Activated CD8-positive, alpha-beta T cell treated with anti-CD3 and anti-CD28 coated beads, Interleukin-2, amount 10 ng/mL, durations not matched to agents 7 days and 5 days (primary cell): ENCODE measurements at regions of chr3 and their contacts with region 1.

Region 1: DNA sequence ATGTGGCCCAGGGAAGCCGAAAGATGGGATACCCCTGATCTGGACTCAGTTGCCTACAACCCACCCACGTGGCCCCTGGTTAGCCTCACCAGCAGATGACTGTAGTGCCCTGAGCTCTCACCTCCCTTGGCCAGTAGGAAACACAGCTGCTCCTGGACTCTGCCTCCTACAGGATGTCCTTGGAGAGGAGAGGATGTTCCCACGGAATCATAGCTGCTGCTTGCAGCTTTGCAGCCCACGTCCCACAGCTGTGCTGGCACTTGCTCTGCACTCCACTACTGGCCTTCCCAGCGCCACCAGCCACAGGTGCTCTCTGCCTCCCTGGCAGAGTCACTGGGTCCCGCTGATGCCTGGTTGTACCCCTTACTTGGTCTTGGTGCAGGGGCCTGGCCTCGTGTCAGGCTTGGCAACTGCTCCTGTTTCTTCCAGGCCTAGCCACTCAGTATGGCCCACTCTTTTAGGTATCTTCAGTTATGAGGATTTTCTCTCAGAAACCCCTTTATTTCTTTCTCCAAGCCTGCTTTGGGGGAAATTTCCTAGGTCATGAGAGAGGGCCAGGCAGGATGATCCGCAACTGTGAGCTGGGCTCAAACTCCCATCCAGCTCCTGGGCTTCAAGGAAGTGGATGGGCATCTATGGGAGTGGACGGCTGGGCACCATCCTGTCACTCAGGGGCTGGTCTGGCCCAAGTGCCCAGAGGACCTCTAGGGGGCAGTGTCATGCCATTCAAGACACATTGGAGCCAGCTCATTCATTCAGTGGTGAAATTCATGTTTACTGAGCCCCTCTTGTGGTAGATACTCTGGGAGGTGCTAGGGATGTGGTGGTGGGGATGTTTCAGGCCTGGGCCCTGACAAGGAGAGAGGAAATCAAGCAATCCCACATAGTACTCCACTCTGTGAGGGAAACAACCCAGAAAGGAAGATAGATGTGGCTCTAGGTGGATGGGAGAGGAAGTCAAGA is 16.2 kb upstream of the VILL start:
- DNase-seq: peak; percentile 82
- ATAC-seq: peak; percentile 97
- H3K4me3 Mint-ChIP-seq: no peak overlapping the region
- H3K27ac Mint-ChIP-seq: peak overlapping the region; percentile 1
- H3K4me1 Mint-ChIP-seq: peaks cover 6% of the 10 kb centered on the region
- H3K27me3 Mint-ChIP-seq: peaks cover 2% of the 10 kb centered on the region

Region 2: DNA sequence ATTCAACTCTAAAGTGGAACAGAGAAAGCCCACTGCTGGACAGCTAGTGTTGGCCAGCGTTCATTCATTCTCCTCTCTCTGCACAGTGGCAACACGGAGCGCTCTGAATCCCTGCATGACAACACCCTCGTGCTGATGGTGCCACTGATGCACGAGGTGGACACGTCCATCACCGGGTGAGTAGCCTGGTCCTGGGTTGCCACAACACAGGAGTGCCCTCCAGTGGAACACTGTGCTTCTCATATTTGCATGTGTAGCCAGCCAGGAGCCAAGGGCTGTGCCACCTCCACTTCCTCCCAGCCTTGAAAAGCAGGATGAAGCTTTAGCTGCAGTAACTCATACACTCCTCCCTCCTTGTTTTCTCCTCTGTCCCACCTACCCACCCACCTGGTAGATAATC is 232.8 kb before region 1 on chr3:
- CTCF ChIA-PET with region 1: no interaction called
- POLR2A ChIA-PET with region 1: no interaction called
- DNase-seq: no peak
- ATAC-seq: no peak
- H3K4me3 Mint-ChIP-seq: no peak overlapping the region
- H3K27ac Mint-ChIP-seq: no peak overlapping the region
- H3K4me1 Mint-ChIP-seq: no peaks in the 10 kb centered on the region
- H3K27me3 Mint-ChIP-seq: peaks cover 8% of the 10 kb centered on the region

Region 3: GRCh38 chr3:37855363-37855970 is 118.9 kb before region 1 on chr3:
- CTCF ChIA-PET with region 1: interaction called, 44 read pairs
- POLR2A ChIA-PET with region 1: no interaction called
- DNase-seq: peak; percentile 81
- ATAC-seq: peak; percentile 54
- H3K4me3 Mint-ChIP-seq: no peak overlapping the region
- H3K27ac Mint-ChIP-seq: no peak overlapping the region
- H3K4me1 Mint-ChIP-seq: peaks cover 6% of the 10 kb centered on the region
- H3K27me3 Mint-ChIP-seq: peaks cover 20% of the 10 kb centered on the region

Region 4: DNA sequence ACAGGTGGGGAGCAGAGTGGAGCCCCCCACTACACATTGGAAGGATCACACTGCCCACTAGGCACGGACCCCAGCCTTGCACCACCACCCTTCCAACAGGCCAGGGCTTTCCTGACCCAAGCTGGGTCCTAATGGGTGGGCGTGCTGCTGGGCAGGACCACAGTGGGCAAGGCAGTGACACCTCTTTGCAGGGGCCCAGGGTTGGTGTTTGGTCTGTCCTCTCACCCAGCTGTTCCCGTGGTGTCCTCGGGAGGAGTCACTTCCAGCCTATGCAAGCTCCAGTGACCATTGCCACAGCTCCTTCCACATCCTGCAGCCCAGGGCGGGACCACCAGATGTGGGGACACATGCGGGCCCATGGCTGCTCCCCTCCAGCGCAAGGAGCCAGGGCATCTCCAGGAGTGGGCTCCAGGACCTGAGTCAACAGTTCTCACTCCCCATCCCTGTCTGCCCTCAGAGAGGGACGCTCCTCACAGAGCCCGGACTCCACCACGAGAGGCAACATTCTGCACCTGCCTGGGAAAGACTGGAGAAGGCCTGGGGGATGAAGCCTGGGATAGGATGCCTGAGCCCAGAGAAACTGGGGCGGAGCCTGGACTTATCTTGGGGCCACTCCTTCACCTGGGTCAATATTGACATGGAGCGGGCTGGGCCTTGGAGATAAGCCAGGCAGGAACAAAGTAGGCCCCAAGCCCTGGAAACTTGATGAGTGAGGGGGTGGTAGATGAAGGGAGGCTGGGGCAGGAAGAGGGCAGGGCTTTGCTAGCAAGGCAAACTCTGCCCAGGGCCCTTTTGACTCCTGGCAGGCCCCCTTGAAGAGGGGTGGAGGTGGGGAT is 12.3 kb after region 1 on chr3:
- CTCF ChIA-PET with region 1: interaction called, 21 read pairs
- POLR2A ChIA-PET with region 1: no interaction called
- DNase-seq: no peak
- ATAC-seq: no peak
- H3K4me3 Mint-ChIP-seq: no peak overlapping the region
- H3K27ac Mint-ChIP-seq: no peak overlapping the region
- H3K4me1 Mint-ChIP-seq: no peaks in the 10 kb centered on the region
- H3K27me3 Mint-ChIP-seq: no peaks in the 10 kb centered on the region

Region 5: DNA sequence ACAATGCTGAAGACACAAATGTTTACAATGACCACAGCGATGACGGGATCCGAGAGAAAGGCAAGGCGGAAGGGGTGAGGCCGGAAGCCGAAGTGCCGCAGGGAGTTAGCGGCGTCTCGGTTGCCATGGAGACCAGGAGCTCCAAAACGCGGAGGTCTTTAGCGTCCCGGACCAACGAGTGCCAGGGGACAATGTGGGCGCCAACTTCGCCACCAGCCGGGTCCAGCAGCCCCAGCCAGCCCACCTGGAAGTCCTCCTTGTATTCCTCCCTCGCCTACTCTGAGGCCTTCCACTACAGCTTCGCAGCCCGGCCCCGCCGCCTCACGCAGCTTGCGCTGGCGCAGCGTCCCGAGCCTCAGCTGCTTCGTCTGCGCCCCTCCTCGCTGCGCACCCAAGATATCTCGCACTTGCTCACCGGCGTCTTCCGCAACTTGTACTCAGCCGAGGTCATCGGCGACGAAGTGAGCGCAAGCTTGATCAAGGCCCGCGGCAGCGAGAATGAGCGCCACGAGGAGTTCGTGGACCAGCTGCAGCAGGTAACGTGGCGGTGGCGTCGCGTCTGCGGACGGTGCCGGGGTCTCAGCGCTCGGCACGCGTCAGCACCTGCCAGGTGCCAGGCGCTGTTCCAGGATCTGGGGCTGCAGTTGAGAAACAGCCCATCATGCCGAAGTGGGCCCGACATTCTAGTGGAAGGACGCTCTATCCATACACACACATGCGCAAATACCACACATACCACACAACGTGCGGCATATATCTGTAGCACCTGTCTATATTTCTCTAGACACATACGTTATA is 64.9 kb after region 1 on chr3 and contains the start of gene DLEC1:
- CTCF ChIA-PET with region 1: interaction called, 12 read pairs
- POLR2A ChIA-PET with region 1: no interaction called
- DNase-seq: peak; percentile 95
- ATAC-seq: peak; percentile 78
- H3K4me3 Mint-ChIP-seq: peak within 1 kb of the TSS; percentile 80
- H3K27ac Mint-ChIP-seq: peak within 1 kb of the TSS; percentile 96
- H3K4me1 Mint-ChIP-seq: peaks cover 38% of the 10 kb centered on the region
- H3K27me3 Mint-ChIP-seq: peaks cover 8% of the 10 kb centered on the region
- total RNA-seq, gene DLEC1: 0.26 to 0.60 TPM

Region 6: GRCh38 chr3:38346587-38347410 is 372.4 kb after region 1 on chr3 and contains the start of gene XYLB:
- CTCF ChIA-PET with region 1: interaction called, 13 read pairs
- POLR2A ChIA-PET with region 1: no interaction called
- DNase-seq: peak; percentile 86
- ATAC-seq: peak; percentile 99
- H3K4me3 Mint-ChIP-seq: peak within 1 kb of the TSS; percentile 75
- H3K27ac Mint-ChIP-seq: peak within 1 kb of the TSS; percentile 53
- H3K4me1 Mint-ChIP-seq: peaks cover 18% of the 10 kb centered on the region
- H3K27me3 Mint-ChIP-seq: peaks cover 3% of the 10 kb centered on the region
- total RNA-seq, gene XYLB: 5.3 to 6.1 TPM